HEK293 (cell line): ENCODE measurements at regions of chr6 and their contacts with region 1.

Region 1: DNA sequence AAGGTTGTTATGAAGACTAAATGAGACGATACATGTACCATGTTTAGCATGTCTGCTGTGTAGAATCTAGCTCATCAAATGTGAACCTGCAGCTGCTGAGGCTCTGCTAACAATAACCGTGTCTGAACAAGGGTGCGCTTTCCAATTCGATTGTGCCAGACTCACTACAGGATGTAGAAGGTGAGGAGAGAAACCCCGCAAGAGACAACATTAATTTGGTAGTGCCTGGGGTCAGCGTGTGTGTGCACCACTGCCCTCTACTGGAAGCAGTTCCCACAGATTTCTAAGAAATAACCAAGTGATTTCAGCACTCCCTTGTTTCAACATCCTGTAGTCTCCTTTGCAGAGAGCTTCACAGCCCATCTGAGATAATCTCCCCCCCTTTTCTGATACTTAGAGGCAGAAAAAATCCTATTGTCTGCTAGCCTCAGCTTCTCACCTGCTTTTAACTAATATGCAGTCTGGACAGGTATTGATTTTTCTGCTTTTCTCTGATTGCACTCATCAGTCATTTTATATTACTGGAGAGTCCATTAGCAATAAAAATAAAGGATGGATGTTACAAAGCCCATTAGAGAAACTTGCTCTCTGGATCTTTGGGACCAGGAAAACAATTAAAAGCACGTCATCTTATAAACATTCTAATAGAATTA is 96.7 kb upstream of the BACH2 start:
- H3K4me3 ChIP-seq: no peak overlapping the region
- H3K27ac ChIP-seq: no peak overlapping the region
- H3K4me1 ChIP-seq: no peaks in the 10 kb centered on the region
- CTCF ChIP-seq: peak; percentile 63; the same call in 1 of the 2 replicates

Region 2: DNA sequence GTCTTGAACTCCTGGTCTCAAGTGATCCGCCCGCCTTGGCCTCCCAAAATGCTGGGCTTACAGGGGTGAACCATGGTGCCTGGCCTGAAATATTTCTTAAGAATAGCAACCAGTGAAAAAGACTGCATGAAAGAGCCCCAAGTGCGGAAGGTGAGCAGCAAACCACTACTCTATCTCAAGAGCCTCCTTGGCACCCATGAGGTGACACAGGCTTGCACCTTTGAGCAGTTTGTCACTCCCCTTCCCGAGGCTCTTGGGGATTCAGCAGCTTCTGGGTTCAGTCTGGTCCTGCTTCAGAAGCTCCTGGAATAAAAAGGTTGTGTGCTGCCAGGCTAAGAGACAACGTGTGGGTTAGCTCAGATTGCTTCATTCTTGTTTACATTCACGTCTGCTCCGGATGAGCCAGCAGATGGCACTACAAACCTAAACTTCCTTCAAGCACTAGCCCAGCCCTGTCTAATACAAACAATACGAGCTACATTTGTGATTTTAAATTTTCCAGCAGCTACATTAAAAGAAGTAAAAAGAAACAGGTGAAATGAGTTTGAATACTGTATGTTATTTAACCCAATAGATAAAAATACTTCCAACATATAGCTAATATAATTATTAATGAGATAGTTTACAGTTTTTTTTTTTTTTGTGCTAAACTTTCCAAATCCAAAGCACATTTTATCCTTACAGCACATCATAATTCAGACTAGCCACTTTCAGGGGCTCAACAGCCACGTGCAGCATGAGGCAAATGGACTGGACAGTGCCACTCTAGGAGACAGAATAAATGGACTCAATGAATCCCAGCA is 452.9 kb before region 1 on chr6:
- CTCF ChIA-PET with region 1: interaction called, 26 read pairs
- POLR2A ChIA-PET with region 1: no interaction called
- H3K4me3 ChIP-seq: no peak overlapping the region
- H3K27ac ChIP-seq: no peak overlapping the region
- H3K4me1 ChIP-seq: no peaks in the 10 kb centered on the region
- CTCF ChIP-seq: peak; percentile 63; the same call in 1 of the 2 replicates

Region 3: GRCh38 chr6:90285611-90286381 is 107.6 kb before region 1 on chr6:
- CTCF ChIA-PET with region 1: interaction called, 69 read pairs
- POLR2A ChIA-PET with region 1: no interaction called
- H3K4me3 ChIP-seq: 0 out of 2 replicates have a peak overlapping the region, but pooled peaks have one; percentile 2
- H3K27ac ChIP-seq: no peak overlapping the region
- H3K4me1 ChIP-seq: peaks cover 6% of the 10 kb centered on the region
- CTCF ChIP-seq: no peak

Region 4: GRCh38 chr6:90304308-90304707 is 89.0 kb before region 1 on chr6:
- CTCF ChIA-PET with region 1: interaction called, 10 read pairs
- POLR2A ChIA-PET with region 1: no interaction called
- H3K4me3 ChIP-seq: no peak overlapping the region
- H3K27ac ChIP-seq: no peak overlapping the region
- H3K4me1 ChIP-seq: no peaks in the 10 kb centered on the region
- CTCF ChIP-seq: no peak

Region 5: GRCh38 chr6:90369024-90369519 is 24.3 kb before region 1 on chr6:
- CTCF ChIA-PET with region 1: interaction called, 15 read pairs
- POLR2A ChIA-PET with region 1: no interaction called
- H3K4me3 ChIP-seq: no peak overlapping the region
- H3K27ac ChIP-seq: peak overlapping the region; percentile 11; the same call in 1 of the 2 replicates
- H3K4me1 ChIP-seq: peaks cover 10% of the 10 kb centered on the region; the same call in 1 of the 2 replicates
- CTCF ChIP-seq: no peak

Region 6: GRCh38 chr6:90383196-90383822 is 10.0 kb before region 1 on chr6:
- CTCF ChIA-PET with region 1: interaction called, 46 read pairs
- POLR2A ChIA-PET with region 1: no interaction called
- H3K4me3 ChIP-seq: no peak overlapping the region
- H3K27ac ChIP-seq: no peak overlapping the region
- H3K4me1 ChIP-seq: no peaks in the 10 kb centered on the region
- CTCF ChIP-seq: no peak

Region 7: GRCh38 chr6:90425161-90425641 is 31.8 kb after region 1 on chr6:
- CTCF ChIA-PET with region 1: interaction called, 10 read pairs
- POLR2A ChIA-PET with region 1: no interaction called
- H3K4me3 ChIP-seq: no peak overlapping the region
- H3K27ac ChIP-seq: no peak overlapping the region
- H3K4me1 ChIP-seq: no peaks in the 10 kb centered on the region
- CTCF ChIP-seq: no peak

Region 8: DNA sequence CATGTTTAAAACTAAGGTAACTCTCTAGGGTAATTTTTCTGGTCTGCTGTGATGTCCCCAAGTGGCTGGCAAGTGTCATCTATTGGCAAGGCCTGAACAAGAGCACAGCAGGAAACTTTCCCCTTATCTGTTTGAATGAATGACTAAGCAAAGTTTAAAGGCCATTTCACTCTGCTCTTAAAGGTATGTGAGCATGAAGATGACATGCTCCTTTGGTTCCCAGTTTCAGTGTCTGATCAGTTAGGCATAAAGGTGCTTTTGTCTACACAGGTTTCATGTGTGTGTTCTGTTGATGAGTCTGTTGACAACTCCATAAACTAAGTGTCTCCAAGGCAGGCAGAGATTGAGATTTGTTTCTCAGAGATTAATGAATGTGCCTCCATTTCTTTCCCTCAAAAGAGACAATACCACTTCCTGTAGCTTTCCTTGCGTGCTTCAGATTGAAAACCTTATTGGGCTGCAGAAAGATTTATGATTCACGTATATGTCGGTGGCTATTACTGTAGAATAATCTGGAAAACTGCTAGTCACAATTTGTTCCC is 109.6 kb after region 1 on chr6:
- CTCF ChIA-PET with region 1: no interaction called
- POLR2A ChIA-PET with region 1: no interaction called
- H3K4me3 ChIP-seq: no peak overlapping the region
- H3K27ac ChIP-seq: no peak overlapping the region
- H3K4me1 ChIP-seq: 0 out of 2 replicates have a peak, but pooled peaks cover 4% of the 10 kb centered on the region
- CTCF ChIP-seq: no peak